ENCODE measurements at regions of chr1 and their contacts with region 1.

Region 1: DNA sequence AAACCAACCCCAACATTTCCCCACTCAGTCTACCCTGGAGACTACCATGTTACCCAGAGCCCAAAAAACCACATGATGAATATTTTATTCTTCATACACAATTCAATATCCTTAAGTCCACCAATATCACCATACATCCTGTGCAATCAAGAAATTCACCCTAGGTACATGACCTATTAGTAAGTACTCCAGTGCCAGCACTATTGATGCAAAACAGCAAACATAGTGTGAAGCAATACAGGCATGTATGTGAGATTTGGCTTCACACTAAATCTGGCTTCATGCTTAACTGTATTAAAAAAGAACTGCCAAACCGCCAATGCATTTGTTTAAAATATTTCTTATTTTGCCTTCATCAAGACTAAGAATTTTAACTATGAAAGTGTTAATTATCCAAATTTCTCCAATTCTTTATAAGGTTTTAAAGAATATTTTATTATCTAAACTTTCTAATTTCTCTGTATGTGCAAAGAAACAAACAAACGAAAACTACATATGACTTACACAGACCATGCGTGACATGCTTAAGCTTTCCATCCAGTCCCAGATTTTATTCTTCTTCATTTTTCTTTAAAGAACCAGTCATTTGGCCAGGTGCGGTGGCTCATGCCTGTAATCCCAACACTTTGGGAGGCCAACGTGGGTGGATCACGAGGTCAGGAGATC is 22.4 kb upstream of the TMEM125 start:
- DNase-seq: no peak
- H3K4me3 ChIP-seq: no peak overlapping the region
- H3K27ac ChIP-seq: no peak overlapping the region
- H3K4me1 ChIP-seq: no peaks in the 10 kb centered on the region
- H3K27me3 ChIP-seq: no peaks in the 10 kb centered on the region
- CTCF ChIP-seq: no peak

Region 2: GRCh38 chr1:43329995-43330751 is 82.8 kb after region 1 on chr1:
- CTCF ChIA-PET with region 1: no interaction called
- POLR2A ChIA-PET with region 1: no interaction called
- intact Hi-C with region 1: loop called (anchors 5 kb)
- DNase-seq: peak; percentile 84
- H3K4me3 ChIP-seq: no peak overlapping the region
- H3K27ac ChIP-seq: peak overlapping the region; percentile 44
- H3K4me1 ChIP-seq: peaks cover 7% of the 10 kb centered on the region
- H3K27me3 ChIP-seq: no peaks in the 10 kb centered on the region
- CTCF ChIP-seq: no peak